Activated naive CD4-positive, alpha-beta T cell treated with anti-CD3 and anti-CD28 coated beads for 36 hours (primary cell): ENCODE measurements at regions of chr14 and their contacts with region 1.

Region 1: DNA sequence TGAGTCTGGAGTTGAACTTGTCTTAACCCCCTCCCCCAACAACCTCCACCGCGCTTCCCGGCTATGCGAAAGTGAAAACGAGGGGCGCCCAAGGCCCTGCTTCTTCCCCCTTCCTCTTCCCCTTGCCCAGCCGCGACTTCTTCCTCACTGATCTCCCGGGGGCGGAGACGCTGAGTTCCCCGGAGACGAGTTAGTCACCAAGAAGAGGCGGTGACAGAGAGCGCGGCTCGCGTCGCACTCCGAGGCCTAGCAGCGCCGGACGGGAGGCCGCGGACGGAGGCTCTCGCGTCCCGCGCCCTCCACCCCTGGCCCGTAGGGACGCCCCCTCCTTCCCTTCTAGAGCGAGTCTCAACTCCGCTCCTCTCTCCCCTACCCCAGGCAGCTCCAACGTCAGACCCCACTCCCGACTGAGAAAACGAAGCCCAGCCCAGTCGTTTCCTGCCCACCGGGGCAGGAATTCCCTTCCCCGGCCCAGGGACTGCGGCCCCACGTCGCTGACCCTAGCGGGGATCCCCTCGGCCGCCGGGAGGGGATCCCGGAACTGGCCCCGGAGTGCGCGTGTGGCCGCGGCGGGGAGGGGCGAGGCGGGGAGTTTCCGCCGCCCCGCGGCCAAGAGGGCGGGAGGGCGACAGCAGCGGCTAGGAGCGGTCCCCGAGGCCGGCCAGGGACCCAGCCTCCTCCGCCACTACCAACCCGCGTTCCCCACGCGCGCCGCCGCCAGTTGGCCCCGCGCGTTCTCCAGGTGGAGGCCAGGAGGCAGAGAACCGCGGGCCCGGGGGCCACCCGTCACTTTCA is 1.4 kb downstream of the BAZ1A start:
- DNase-seq: peak; percentile 95
- H3K4me3 Mint-ChIP-seq: peak overlapping the region; percentile 89
- H3K27ac Mint-ChIP-seq: peak overlapping the region; percentile 98
- H3K4me1 Mint-ChIP-seq: peaks cover 35% of the 10 kb centered on the region
- H3K27me3 Mint-ChIP-seq: no peaks in the 10 kb centered on the region

Region 2: DNA sequence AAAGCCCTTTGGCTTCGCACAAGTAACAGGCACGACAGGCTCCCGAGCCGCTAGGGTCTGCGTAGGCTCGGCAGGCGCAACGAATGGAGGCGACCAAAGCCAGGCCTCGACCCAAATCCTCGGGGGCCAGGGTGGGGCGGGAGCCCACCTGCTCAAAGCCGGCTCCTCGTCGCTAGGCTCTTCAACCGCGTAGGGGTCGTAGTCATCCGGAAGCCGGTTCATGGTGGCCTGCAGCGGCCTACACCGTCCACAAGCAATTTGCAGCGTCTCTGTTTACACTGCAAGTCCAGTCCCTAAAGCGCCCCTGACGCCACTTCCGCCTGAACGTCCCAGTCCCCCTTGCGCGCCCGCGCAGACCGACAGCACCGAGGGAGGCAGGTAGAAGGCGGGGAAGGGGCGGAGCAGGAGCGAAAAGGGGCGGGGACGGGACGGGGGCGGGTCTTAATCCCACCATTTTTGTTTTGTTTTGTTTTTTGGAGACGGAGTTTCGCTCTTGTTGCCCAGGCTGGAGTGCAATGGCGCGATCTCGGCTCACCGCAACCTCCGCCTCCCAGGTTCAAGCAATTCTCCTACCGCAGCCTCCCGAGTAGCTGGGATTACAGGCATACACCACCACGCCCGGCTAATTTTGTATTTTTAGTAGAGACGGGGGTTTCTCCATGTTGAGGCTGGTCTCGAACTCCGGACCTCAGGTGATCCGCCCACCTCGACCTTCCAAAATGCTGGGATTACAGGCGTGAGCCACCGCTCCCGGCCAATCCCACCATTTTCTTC is 334.2 kb before region 1 on chr14 and contains the start of gene EAPP:
- CTCF ChIA-PET with region 1: no interaction called
- intact Hi-C with region 1: loop called (anchors 5 kb)
- DNase-seq: peak; percentile 98
- H3K4me3 Mint-ChIP-seq: peak within 1 kb of the TSS; percentile 95
- H3K27ac Mint-ChIP-seq: peak within 1 kb of the TSS; percentile 98
- H3K4me1 Mint-ChIP-seq: peaks cover 32% of the 10 kb centered on the region
- H3K27me3 Mint-ChIP-seq: no peaks in the 10 kb centered on the region
- total RNA-seq, gene EAPP: 34.0 to 35.4 TPM

Region 3: GRCh38 chr14:34714320-34715126 is 159.3 kb before region 1 on chr14 and contains the start of gene CFL2:
- CTCF ChIA-PET with region 1: no interaction called
- intact Hi-C with region 1: loop called (anchors 1 kb)
- DNase-seq: peak; percentile 75
- H3K4me3 Mint-ChIP-seq: peak within 1 kb of the TSS; percentile 81
- H3K27ac Mint-ChIP-seq: peak within 1 kb of the TSS; percentile 82
- H3K4me1 Mint-ChIP-seq: peaks cover 18% of the 10 kb centered on the region
- H3K27me3 Mint-ChIP-seq: no peaks in the 10 kb centered on the region
- total RNA-seq, gene CFL2: 3.1 to 4.5 TPM

Region 4: GRCh38 chr14:34833549-34834523 is 40.0 kb before region 1 on chr14:
- CTCF ChIA-PET with region 1: no interaction called
- intact Hi-C with region 1: loop called (anchors 1 kb)
- DNase-seq: no peak
- H3K4me3 Mint-ChIP-seq: no peak overlapping the region
- H3K27ac Mint-ChIP-seq: peak overlapping the region; percentile 4
- H3K4me1 Mint-ChIP-seq: peaks cover 48% of the 10 kb centered on the region
- H3K27me3 Mint-ChIP-seq: no peaks in the 10 kb centered on the region

Region 5: GRCh38 chr14:34931206-34931605 is 57.4 kb after region 1 on chr14:
- CTCF ChIA-PET with region 1: interaction called, 3 read pairs
- intact Hi-C with region 1: loop called (anchors 1 kb)
- DNase-seq: peak; percentile 56
- H3K4me3 Mint-ChIP-seq: peak overlapping the region; percentile 64
- H3K27ac Mint-ChIP-seq: peak overlapping the region; percentile 93
- H3K4me1 Mint-ChIP-seq: peaks cover 49% of the 10 kb centered on the region
- H3K27me3 Mint-ChIP-seq: no peaks in the 10 kb centered on the region

Region 6: DNA sequence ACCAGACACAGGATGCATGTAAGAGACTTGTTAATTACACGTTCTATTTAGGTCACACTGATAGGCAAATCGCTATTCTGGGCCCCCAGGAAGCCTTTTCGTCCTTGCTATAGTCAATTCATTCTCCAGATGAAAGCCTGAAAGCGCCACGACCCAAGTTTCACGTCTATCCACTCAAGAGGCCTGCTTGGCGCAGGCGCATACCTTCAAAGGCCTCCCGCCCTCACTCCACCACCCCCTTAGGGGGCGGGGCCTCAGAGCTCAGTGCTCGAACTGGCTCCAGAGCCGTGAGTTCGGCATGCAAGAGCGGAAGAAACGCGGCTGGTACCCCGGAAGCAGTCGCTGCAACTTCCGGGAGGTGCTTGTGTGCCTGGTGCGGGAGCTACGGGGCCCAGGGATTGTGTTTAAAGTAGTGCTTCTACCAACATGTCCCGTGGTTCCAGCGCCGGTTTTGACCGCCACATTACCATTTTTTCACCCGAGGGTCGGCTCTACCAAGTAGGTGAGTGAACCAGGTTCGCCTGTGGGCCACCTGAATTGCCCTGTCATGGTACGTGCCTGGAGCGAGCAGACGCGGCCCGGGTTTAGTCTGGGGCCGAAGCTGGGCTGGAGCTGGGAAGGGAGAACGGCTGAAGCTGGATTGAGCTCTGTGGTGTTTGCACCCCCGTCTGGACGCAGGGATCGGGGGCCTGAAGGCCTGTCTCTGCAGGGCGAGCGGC is 418.4 kb after region 1 on chr14 and contains the start of gene PSMA6:
- CTCF ChIA-PET with region 1: no interaction called
- intact Hi-C with region 1: loop called (anchors 1 kb)
- DNase-seq: peak; percentile 99
- H3K4me3 Mint-ChIP-seq: peak within 1 kb of the TSS; percentile 98
- H3K27ac Mint-ChIP-seq: peak within 1 kb of the TSS; percentile 97
- H3K4me1 Mint-ChIP-seq: peaks cover 53% of the 10 kb centered on the region
- H3K27me3 Mint-ChIP-seq: no peaks in the 10 kb centered on the region
- total RNA-seq, gene PSMA6: 433 to 437 TPM